Activated CD4-positive, alpha-beta T cell treated with anti-CD3 and anti-CD28 coated beads, Interleukin-2, amount 10 ng/mL, durations not matched to agents 24 days and 14 days (primary cell): ENCODE measurements at regions of chr3 and their contacts with region 1.

Region 1: GRCh38 chr3:172522871-172523818 is at the start of gene TNFSF10:
- DNase-seq: peak; percentile 94
- H3K4me3 Mint-ChIP-seq: peak within 1 kb of the TSS; percentile 87
- H3K27ac Mint-ChIP-seq: peak within 1 kb of the TSS; percentile 94
- H3K4me1 Mint-ChIP-seq: peaks cover 43% of the 10 kb centered on the region
- H3K27me3 Mint-ChIP-seq: no peaks in the 10 kb centered on the region
- total RNA-seq, gene TNFSF10: 71.5 and 77.5 TPM in 2 replicates

Region 2: GRCh38 chr3:172550347-172550943 is 27.3 kb after region 1 on chr3:
- intact Hi-C with region 1: loop called (anchors 1 kb)
- DNase-seq: peak; percentile 87
- H3K4me3 Mint-ChIP-seq: peak overlapping the region; percentile 37
- H3K27ac Mint-ChIP-seq: peak overlapping the region; percentile 82
- H3K4me1 Mint-ChIP-seq: peaks cover 58% of the 10 kb centered on the region
- H3K27me3 Mint-ChIP-seq: no peaks in the 10 kb centered on the region

Region 3: DNA sequence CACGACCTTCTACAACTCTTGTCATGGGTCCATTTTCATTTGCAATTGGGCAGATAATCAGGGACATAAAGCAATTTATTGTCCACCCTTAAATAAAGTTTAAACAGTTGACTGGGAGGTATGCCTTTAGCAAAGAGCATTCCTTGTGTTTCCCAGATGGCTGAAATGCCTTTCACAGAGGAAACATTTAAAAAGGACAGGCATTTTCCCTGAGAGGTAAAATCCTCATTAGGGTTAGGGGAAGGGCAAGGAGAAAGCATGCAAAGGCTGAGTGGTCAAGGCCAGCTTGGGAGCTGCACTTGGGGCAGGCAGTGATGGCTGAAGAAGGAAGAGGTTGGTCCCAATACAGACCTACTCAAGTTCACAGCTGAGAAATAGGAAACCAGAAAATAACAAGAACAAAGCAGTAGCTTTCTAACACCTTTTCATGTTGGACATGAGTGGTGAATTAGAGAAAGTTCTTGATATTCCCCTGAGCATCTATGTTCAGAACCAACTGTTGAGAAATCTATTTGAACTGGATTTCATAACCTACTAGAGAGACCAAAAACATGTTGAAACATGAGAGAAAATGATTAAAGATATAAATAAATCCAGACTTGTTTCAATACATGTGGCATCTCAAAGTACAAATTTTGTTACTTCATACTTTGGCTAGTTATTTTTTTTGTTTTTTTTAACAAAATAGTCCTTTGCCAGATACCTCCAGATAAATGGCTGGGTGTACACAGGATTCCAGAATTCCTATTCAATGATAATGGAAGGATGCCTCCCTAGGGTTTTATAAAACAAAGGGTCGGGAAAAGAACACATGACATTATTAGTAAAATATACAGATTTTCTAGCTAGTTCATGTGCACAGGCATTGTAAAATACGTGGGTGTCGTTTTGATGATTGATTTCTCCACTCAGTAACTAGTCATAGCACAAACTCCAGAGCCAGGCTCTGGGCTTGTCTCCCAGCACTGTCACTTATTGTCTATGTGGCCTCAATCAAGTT is 34.4 kb after region 1 on chr3:
- intact Hi-C with region 1: loop called (anchors 1 kb)
- DNase-seq: no peak
- H3K4me3 Mint-ChIP-seq: no peak overlapping the region
- H3K27ac Mint-ChIP-seq: no peak overlapping the region
- H3K4me1 Mint-ChIP-seq: peaks cover 40% of the 10 kb centered on the region
- H3K27me3 Mint-ChIP-seq: no peaks in the 10 kb centered on the region